Naive thymus-derived CD4-positive, alpha-beta T cell (primary cell): ENCODE measurements at regions of chr17 and their contacts with region 1.

Region 1: GRCh38 chr17:44014437-44015172 is at the start of gene TMEM101:
- DNase-seq: peak; percentile 63 to 90 (median 82)
- ATAC-seq: peak; percentile 99
- H3K4me3 ChIP-seq: peak within 1 kb of the TSS; percentile 96
- H3K4me3 Mint-ChIP-seq: peak within 1 kb of the TSS; percentile 93 to 100 (median 98)
- H3K27ac ChIP-seq: peak within 1 kb of the TSS; percentile 73
- H3K27ac Mint-ChIP-seq: peak within 1 kb of the TSS; percentile 84 to 99 (median 95)
- H3K4me1 ChIP-seq: peaks cover 8 to 9% of the 10 kb centered on the region in 2 donors
- H3K4me1 Mint-ChIP-seq: peaks cover 7 to 23% (median 11%) of the 10 kb centered on the region in 7 donors
- H3K27me3 ChIP-seq: no peaks in the 10 kb centered on the region
- H3K27me3 Mint-ChIP-seq: peaks cover 0 to under 1% (median 0%) of the 10 kb centered on the region in 5 donors
- total RNA-seq, gene TMEM101: 12.1 to 32.0 (median 30.5) TPM

Region 2: GRCh38 chr17:44070455-44071197 is 56.0 kb after region 1 on chr17 and contains the start of gene G6PC3:
- CTCF ChIA-PET with region 1: no interaction called
- POLR2A ChIA-PET with region 1: no interaction called
- intact Hi-C with region 1: loop called (anchors 2 kb)
- DNase-seq: peak; percentile 35 to 86 (median 49)
- ATAC-seq: peak; percentile 67
- H3K4me3 ChIP-seq: peak within 1 kb of the TSS; percentile 75
- H3K4me3 Mint-ChIP-seq: peak within 1 kb of the TSS; percentile 91 to 97 (median 94)
- H3K27ac ChIP-seq: peak within 1 kb of the TSS; percentile 83
- H3K27ac Mint-ChIP-seq: peak within 1 kb of the TSS; percentile 29 to 96 (median 93)
- H3K4me1 ChIP-seq: peaks cover 21 to 24% of the 10 kb centered on the region in 2 donors
- H3K4me1 Mint-ChIP-seq: peaks cover 31 to 49% (median 36%) of the 10 kb centered on the region in 7 donors
- H3K27me3 ChIP-seq: no peaks in the 10 kb centered on the region
- H3K27me3 Mint-ChIP-seq: no peaks in the 10 kb centered on the region
- total RNA-seq, gene G6PC3: 9.4 to 25.8 (median 13.9) TPM